ENCODE measurements at regions of chr11 and their contacts with region 1.

Region 1: GRCh38 chr11:75241036-75241905 is 697 bp downstream of the TPBGL start:
- DNase-seq: peak; percentile 61 to 84
- H3K4me3 ChIP-seq: peak overlapping the region; percentile 36 to 39
- H3K27ac ChIP-seq: no peak overlapping the region
- H3K4me1 ChIP-seq: peaks cover 0 to 27% (median 17%) of the 10 kb centered on the region in 4 donors
- H3K27me3 ChIP-seq: peaks cover 0 to 81% of the 10 kb centered on the region in 2 donors
- CTCF ChIP-seq: peak; percentile 62 to 96

Region 2: GRCh38 chr11:74923125-74923524 is 318.1 kb before region 1 on chr11:
- intact Hi-C with region 1: no loop called
- DNase-seq: no peak
- H3K4me3 ChIP-seq: no peak overlapping the region
- H3K27ac ChIP-seq: no peak overlapping the region
- H3K4me1 ChIP-seq: peaks cover 0 to 9% (median 0%) of the 10 kb centered on the region in 4 donors
- H3K27me3 ChIP-seq: no peaks in the 10 kb centered on the region
- CTCF ChIP-seq: no peak

Region 3: DNA sequence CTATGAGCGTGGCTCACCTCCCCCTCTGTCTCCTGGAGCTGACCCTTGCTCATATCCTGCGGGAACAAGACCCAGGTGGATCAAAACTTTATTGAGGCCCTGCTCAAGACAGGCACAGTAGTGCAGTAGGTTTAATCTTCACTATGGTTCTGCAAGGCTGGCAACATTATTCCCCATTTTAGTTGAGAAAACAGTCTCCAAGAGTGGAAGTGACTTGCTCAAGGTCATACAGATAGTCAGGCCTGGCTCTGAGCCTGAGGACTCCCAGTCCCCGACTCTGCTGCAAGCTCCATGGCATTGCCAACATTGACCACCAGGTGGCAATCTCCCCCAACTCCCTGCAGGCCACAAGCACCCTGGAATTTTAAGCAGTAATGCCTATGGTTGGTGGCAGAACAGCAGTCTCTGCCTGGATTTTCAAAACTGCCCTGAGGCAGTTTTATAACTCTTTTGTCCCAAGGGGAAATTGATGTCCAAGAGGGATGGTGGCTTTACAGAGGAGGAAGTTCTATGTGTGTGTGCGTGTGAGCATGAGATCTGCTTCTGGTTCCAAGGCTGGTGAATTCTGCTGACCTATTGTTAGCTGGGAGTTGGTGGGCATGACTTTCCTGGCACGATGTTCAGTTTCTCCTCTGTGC is 218.4 kb before region 1 on chr11:
- intact Hi-C with region 1: loop called (anchors 2 kb)
- DNase-seq: peak; percentile 72 to 80
- H3K4me3 ChIP-seq: no peak overlapping the region
- H3K27ac ChIP-seq: no peak overlapping the region
- H3K4me1 ChIP-seq: no peaks in the 10 kb centered on the region
- H3K27me3 ChIP-seq: no peaks in the 10 kb centered on the region
- CTCF ChIP-seq: peak; percentile 74 to 93

Region 4: GRCh38 chr11:75147875-75148263 is 93.4 kb before region 1 on chr11:
- intact Hi-C with region 1: loop called (anchors 5 kb)
- DNase-seq: peak; percentile 53 to 77
- H3K4me3 ChIP-seq: no peak overlapping the region
- H3K27ac ChIP-seq: no peak overlapping the region
- H3K4me1 ChIP-seq: no peaks in the 10 kb centered on the region
- H3K27me3 ChIP-seq: peaks cover 0 to 15% of the 10 kb centered on the region in 2 donors
- CTCF ChIP-seq: no peak

Region 5: DNA sequence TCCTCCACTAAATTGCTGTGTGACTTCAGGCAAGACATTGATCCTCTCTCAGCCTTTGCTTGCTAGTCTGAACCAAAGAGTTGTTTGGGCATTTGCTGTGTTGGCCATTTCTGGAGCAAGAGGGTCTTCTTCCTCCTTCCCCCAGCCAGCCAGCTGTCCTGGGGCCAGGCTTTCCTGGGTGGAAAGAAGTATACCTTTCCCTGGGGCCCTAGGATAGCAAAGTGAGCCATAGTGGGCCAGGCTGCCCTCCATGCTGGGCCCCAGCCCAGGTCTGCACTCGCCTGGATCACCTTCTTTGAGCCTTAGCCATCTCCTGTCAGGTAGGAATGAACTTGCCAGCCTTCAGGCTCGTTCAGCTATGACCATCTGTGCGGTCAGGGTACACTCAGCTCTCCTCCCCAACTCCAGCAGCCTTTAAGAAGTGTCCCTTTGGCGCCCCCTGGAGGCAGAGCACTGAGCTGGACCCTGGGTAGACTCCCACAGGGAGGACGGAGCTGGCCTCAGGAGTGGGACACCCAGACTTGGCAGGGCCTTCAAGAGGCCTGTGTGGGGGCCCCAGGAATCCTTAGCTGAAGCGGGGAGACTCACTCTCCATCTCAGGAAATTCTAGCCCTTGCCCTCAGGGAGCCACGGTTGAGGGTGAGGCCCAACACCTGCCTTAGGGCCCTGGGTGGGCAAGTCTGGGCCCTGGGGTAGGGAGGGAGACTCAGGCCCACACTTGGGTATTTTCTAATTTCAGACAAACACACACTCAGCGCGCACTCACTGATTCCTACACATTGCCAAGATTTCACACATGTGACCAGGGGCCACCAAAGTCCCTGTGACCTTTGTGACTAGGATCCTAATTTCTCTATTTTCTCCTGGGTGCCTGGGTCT is 36.3 kb before region 1 on chr11:
- intact Hi-C with region 1: no loop called
- DNase-seq: peak; percentile 84 to 85
- H3K4me3 ChIP-seq: no peak overlapping the region
- H3K27ac ChIP-seq: no peak overlapping the region
- H3K4me1 ChIP-seq: peaks cover 0 to 3% (median 0%) of the 10 kb centered on the region in 4 donors
- H3K27me3 ChIP-seq: peaks cover 0 to 9% of the 10 kb centered on the region in 2 donors
- CTCF ChIP-seq: peak; percentile 56 to 57

Region 6: GRCh38 chr11:75743711-75744563 is 502.7 kb after region 1 on chr11:
- intact Hi-C with region 1: no loop called
- DNase-seq: peak in 1 of 2 donors; percentile 6
- H3K4me3 ChIP-seq: no peak overlapping the region
- H3K27ac ChIP-seq: no peak overlapping the region
- H3K4me1 ChIP-seq: no peaks in the 10 kb centered on the region
- H3K27me3 ChIP-seq: peaks cover 0 to 21% of the 10 kb centered on the region in 2 donors
- CTCF ChIP-seq: no peak